ENCODE measurements at regions of chr17 and their contacts with region 1.

Region 1: GRCh38 chr17:37130984-37131446 is 182.3 kb downstream of the AATF start:
- DNase-seq: no peak
- ATAC-seq: no peak
- H3K4me3 ChIP-seq: no peak overlapping the region
- H3K27ac ChIP-seq: no peak overlapping the region
- H3K4me1 ChIP-seq: peaks cover 0 to 9% (median 0%) of the 10 kb centered on the region in 9 donors
- H3K27me3 ChIP-seq: no peaks in the 10 kb centered on the region
- CTCF ChIP-seq: no peak

Region 2: GRCh38 chr17:37079735-37080134 is 51.3 kb before region 1 on chr17:
- intact Hi-C with region 1: loop called in 1 of 10 experiments (anchors 10 kb)
- DNase-seq: no peak
- ATAC-seq: no peak
- H3K4me3 ChIP-seq: no peak overlapping the region
- H3K27ac ChIP-seq: no peak overlapping the region
- H3K4me1 ChIP-seq: no peaks in the 10 kb centered on the region
- H3K27me3 ChIP-seq: no peaks in the 10 kb centered on the region
- CTCF ChIP-seq: no peak

Region 3: DNA sequence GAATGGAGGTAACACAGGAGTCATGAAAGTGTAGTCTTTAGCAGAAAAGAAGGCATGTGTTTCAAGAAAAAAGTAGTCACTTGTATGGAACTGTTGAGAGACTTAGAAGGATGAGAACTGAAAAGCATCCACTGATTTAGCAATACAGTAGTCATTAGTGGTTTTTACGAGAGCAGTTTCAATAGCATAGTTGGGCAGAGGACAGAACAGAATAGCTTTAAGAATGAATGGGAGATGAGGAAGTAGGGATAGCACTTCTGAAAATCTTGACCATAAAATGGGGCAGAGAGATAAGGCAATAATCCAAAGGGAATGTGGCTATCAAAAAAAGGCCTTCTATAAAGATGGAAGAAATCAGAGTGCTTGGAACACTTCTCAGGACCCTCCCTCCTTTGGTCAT is 179.9 kb after region 1 on chr17:
- intact Hi-C with region 1: no loop called
- DNase-seq: no peak
- ATAC-seq: no peak
- H3K4me3 ChIP-seq: no peak overlapping the region
- H3K27ac ChIP-seq: no peak overlapping the region
- H3K4me1 ChIP-seq: no peaks in the 10 kb centered on the region
- H3K27me3 ChIP-seq: no peaks in the 10 kb centered on the region
- CTCF ChIP-seq: no peak